ENCODE measurements at regions of chr4 and their contacts with region 1.

Region 1: GRCh38 chr4:127598656-127599055 is 34.1 kb upstream of the INTU start:
- DNase-seq: no peak
- H3K4me3 ChIP-seq: no peak overlapping the region
- H3K27ac ChIP-seq: no peak overlapping the region
- H3K4me1 ChIP-seq: no peaks in the 10 kb centered on the region
- H3K27me3 ChIP-seq: peaks cover 0 to 6% (median 3%) of the 10 kb centered on the region in 5 experiments

Region 2: GRCh38 chr4:127586922-127587571 is 11.6 kb before region 1 on chr4:
- CTCF ChIA-PET with region 1: interaction called, 13 read pairs
- POLR2A ChIA-PET with region 1: no interaction called
- DNase-seq: peak; percentile 13 to 28 (median 24)
- H3K4me3 ChIP-seq: no peak overlapping the region
- H3K27ac ChIP-seq: no peak overlapping the region
- H3K4me1 ChIP-seq: no peaks in the 10 kb centered on the region
- H3K27me3 ChIP-seq: no peaks in the 10 kb centered on the region

Region 3: DNA sequence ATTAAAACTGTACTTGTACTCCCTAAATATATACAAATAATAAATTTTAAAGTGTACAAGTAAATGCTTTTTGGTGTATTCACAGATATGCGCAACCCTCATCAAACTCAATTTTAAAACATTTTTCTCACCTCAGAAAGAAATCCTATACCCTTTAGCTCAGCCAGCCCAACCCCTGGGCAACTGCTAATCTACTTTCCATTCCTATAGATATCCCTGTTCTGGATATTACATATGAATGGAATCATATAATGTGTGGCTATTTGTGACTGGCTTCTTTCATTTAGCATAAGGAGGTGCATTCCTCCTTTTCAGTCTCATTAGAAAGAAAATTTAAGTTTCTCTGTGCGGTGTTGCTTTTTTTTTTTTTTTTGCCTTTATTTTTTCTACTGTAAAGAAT is 73.5 kb after region 1 on chr4:
- CTCF ChIA-PET with region 1: no interaction called
- POLR2A ChIA-PET with region 1: no interaction called
- DNase-seq: no peak
- H3K4me3 ChIP-seq: no peak overlapping the region
- H3K27ac ChIP-seq: no peak overlapping the region
- H3K4me1 ChIP-seq: no peaks in the 10 kb centered on the region
- H3K27me3 ChIP-seq: no peaks in the 10 kb centered on the region

Measured in common myeloid progenitor, CD34-positive (primary cell).